GM12878 (cell line): ENCODE measurements at regions of chr12 and their contacts with region 1.

Region 1: DNA sequence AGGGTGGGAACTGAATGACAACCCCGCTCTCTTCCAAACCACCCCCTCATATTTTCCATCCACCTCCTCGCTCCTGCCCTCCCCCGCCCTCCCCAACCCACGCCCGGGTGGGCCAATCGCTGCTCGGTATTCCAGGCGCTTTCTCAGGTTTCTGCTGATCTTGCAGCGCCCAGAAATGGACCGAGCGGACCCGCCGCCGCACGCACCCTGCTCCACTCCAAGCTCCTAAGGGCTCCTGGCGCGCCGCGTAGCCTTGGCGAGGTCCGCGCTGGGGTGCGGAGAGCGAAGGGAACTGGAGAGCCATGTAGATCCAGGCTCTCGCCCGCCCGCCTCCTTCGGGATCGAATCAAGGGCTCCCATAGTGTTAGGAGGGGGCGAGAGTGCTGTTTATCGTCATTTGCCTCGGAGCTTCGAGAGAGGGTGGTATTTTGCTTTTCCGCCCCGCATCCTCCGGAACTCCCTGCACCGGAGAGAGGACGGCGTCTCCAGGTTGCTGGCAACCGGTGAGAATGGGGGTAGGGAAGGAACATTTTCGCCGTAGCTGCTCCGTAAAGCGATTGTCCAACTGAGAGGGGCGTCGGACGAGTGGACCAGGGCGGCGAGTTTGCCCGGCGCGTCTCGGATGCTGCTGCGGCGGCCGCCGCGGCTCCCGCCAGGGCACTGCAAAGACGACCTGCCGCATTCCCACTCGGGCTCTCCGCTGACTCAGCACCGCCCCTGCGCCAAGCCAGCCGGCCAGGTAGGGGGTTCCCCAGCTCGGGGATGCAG is at the start of gene KCNA1:
- DNase-seq: no peak
- ATAC-seq: peak; percentile 43
- H3K4me3 ChIP-seq: peak within 1 kb of the TSS; percentile 80
- H3K27ac ChIP-seq: peak within 1 kb of the TSS; percentile 17
- H3K4me1 ChIP-seq: peaks cover 16% of the 10 kb centered on the region
- H3K27me3 ChIP-seq: peaks cover 9 to 15% of the 10 kb centered on the region in 2 experiments; a peak in 3 of 4 replicates
- CTCF ChIP-seq: no peak
- EP300 ChIP-seq: no peak
- POLR2A ChIP-seq: 0 out of 2 replicates have a peak, but pooled peaks have one; percentile 30
- RAD21 ChIP-seq: no peak
- polyA plus RNA-seq, gene KCNA1: 0.29 to 0.31 TPM

Region 2: DNA sequence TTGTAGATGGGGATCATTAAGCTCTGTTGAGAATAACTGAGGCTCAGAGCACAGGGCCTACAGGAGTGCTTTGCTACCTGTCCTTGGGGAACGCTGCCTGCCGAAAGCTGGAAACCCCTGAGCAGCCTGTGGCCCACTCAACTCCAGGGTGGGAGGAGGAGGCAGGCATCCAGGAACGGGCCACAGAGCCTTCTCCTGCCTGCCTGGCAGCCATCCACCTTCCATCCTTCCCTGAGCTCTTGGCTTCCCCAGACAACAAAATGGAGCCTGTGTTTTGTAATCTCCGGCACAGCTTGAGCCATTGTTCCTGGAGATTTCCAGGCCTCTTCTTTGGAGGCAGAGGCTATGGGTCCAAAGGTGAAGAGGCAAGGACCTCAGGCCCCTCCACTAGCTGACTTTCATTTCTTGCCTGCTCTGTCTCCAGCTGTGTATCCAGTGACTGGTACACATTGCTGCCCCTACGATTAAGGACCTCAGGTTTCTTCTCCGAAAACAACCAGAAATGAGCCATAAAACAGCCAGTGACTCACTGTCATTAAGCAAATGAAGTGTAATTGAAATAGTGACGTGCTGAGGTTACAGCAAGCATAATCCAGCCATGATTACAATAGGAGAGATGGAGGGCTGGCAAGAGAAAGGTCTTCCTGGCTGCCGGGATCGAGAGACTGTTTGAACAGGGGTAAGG is 77.3 kb after region 1 on chr12:
- CTCF ChIA-PET with region 1: no interaction called
- POLR2A ChIA-PET with region 1: no interaction called
- RAD21 ChIA-PET with region 1: no interaction called
- SMC1A ChIA-PET with region 1: no interaction called
- in situ Hi-C with region 1: no loop called
- intact Hi-C with region 1: loop called (anchors 5 kb)
- DNase-seq: no peak
- ATAC-seq: no peak
- H3K4me3 ChIP-seq: no peak overlapping the region
- H3K27ac ChIP-seq: no peak overlapping the region
- H3K4me1 ChIP-seq: peaks cover 4% of the 10 kb centered on the region
- H3K27me3 ChIP-seq: no peaks in the 10 kb centered on the region; a peak in 2 of 4 replicates
- CTCF ChIP-seq: no peak
- EP300 ChIP-seq: no peak
- POLR2A ChIP-seq: no peak
- RAD21 ChIP-seq: no peak